IMR-90 (cell line): ENCODE measurements at regions of chr2 and their contacts with region 1.

Region 1: DNA sequence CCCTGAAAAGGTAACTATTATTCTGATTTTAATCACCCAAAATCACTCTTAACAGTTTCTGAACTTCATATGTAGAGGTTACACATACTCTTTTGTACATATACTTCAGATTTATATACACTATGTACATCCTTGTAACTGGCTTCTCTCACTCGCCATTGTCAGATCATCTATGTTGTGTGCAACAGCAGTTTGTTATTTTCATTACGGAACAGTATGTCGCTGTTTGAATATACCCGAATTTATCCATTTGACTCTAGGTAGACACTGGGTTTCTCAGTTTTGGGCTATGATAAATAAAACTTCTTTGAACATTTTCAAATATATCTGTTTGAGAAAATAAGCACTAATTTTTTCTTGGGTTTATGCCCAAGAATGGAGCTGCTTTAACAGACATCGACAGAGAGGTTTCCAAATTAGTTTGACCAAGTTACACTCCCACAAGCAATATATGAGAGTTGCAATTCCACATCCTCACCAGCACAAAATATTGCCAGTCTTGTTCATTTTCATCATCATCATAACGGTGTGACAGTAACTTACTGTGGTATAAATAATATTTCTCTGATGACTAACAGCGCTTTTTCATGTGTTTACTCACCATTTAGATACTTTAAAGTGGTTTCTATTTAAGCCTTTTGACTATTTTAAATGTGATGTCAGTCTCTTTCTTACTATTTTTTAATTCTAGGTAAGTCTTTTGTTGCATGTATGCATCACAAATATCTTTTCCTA is 80.9 kb downstream of the SMC6 start:
- DNase-seq: peak; percentile 79
- ATAC-seq: peak; percentile 84
- H3K4me3 ChIP-seq: no peak overlapping the region
- H3K27ac ChIP-seq: no peak overlapping the region
- H3K4me1 ChIP-seq: no peaks in the 10 kb centered on the region; the same call in none of the 2 replicates
- H3K27me3 ChIP-seq: no peaks in the 10 kb centered on the region
- CTCF ChIP-seq: no peak; the same call in 1 of the 2 replicates
- POLR2A ChIP-seq: no peak
- RAD21 ChIP-seq: no peak

Region 2: GRCh38 chr2:16773080-16773713 is 899.6 kb before region 1 on chr2:
- CTCF ChIA-PET with region 1: interaction called, 11 read pairs
- POLR2A ChIA-PET with region 1: no interaction called
- dilution Hi-C with region 1: no loop called
- in situ Hi-C with region 1: loop called (anchors 25 kb)
- intact Hi-C with region 1: loop called (anchors 1 kb)
- DNase-seq: peak; percentile 42
- ATAC-seq: peak; percentile 87
- H3K4me3 ChIP-seq: no peak overlapping the region
- H3K27ac ChIP-seq: no peak overlapping the region
- H3K4me1 ChIP-seq: no peaks in the 10 kb centered on the region
- H3K27me3 ChIP-seq: peaks cover 1% of the 10 kb centered on the region; the same call in 1 of the 2 replicates
- CTCF ChIP-seq: peak; percentile 56
- POLR2A ChIP-seq: no peak
- RAD21 ChIP-seq: peak; percentile 70

Region 3: GRCh38 chr2:17309741-17310339 is 362.9 kb before region 1 on chr2:
- CTCF ChIA-PET with region 1: interaction called, 3 read pairs
- POLR2A ChIA-PET with region 1: no interaction called
- dilution Hi-C with region 1: no loop called
- in situ Hi-C with region 1: no loop called
- intact Hi-C with region 1: loop called (anchors 1 kb)
- DNase-seq: peak; percentile 49
- ATAC-seq: peak; percentile 77
- H3K4me3 ChIP-seq: no peak overlapping the region
- H3K27ac ChIP-seq: no peak overlapping the region
- H3K4me1 ChIP-seq: no peaks in the 10 kb centered on the region
- H3K27me3 ChIP-seq: no peaks in the 10 kb centered on the region
- CTCF ChIP-seq: peak; percentile 51
- POLR2A ChIP-seq: no peak
- RAD21 ChIP-seq: peak; percentile 49; the same call in 1 of the 2 replicates

Region 4: GRCh38 chr2:17470855-17471641 is 201.7 kb before region 1 on chr2:
- CTCF ChIA-PET with region 1: no interaction called
- POLR2A ChIA-PET with region 1: no interaction called
- dilution Hi-C with region 1: no loop called
- in situ Hi-C with region 1: loop called (anchors 10 kb)
- intact Hi-C with region 1: loop called (anchors 1 kb)
- DNase-seq: peak; percentile 40
- ATAC-seq: peak; percentile 48
- H3K4me3 ChIP-seq: no peak overlapping the region
- H3K27ac ChIP-seq: no peak overlapping the region
- H3K4me1 ChIP-seq: no peaks in the 10 kb centered on the region
- H3K27me3 ChIP-seq: no peaks in the 10 kb centered on the region
- CTCF ChIP-seq: peak; percentile 45
- POLR2A ChIP-seq: no peak
- RAD21 ChIP-seq: peak; percentile 60

Region 5: GRCh38 chr2:17479875-17480274 is 192.9 kb before region 1 on chr2:
- CTCF ChIA-PET with region 1: interaction called, 10 read pairs
- POLR2A ChIA-PET with region 1: no interaction called
- dilution Hi-C with region 1: no loop called
- in situ Hi-C with region 1: loop called (anchors 10 kb)
- intact Hi-C with region 1: no loop called
- DNase-seq: peak; percentile 28
- ATAC-seq: peak; percentile 37; the same call in 1 of the 2 replicates
- H3K4me3 ChIP-seq: no peak overlapping the region
- H3K27ac ChIP-seq: no peak overlapping the region
- H3K4me1 ChIP-seq: no peaks in the 10 kb centered on the region
- H3K27me3 ChIP-seq: no peaks in the 10 kb centered on the region
- CTCF ChIP-seq: no peak
- POLR2A ChIP-seq: no peak
- RAD21 ChIP-seq: no peak

Region 6: GRCh38 chr2:17529771-17530170 is 143.0 kb before region 1 on chr2:
- CTCF ChIA-PET with region 1: no interaction called
- POLR2A ChIA-PET with region 1: no interaction called
- dilution Hi-C with region 1: no loop called
- in situ Hi-C with region 1: no loop called
- intact Hi-C with region 1: no loop called
- DNase-seq: no peak
- ATAC-seq: no peak
- H3K4me3 ChIP-seq: no peak overlapping the region
- H3K27ac ChIP-seq: no peak overlapping the region
- H3K4me1 ChIP-seq: no peaks in the 10 kb centered on the region
- H3K27me3 ChIP-seq: no peaks in the 10 kb centered on the region
- CTCF ChIP-seq: no peak
- POLR2A ChIP-seq: no peak
- RAD21 ChIP-seq: no peak

Region 7: GRCh38 chr2:17646081-17646554 is 26.6 kb before region 1 on chr2:
- CTCF ChIA-PET with region 1: interaction called, 27 read pairs
- POLR2A ChIA-PET with region 1: no interaction called
- dilution Hi-C with region 1: no loop called
- in situ Hi-C with region 1: no loop called
- intact Hi-C with region 1: loop called (anchors 2 kb)
- DNase-seq: peak; percentile 88
- ATAC-seq: peak; percentile 76
- H3K4me3 ChIP-seq: no peak overlapping the region
- H3K27ac ChIP-seq: no peak overlapping the region
- H3K4me1 ChIP-seq: peaks cover 21% of the 10 kb centered on the region
- H3K27me3 ChIP-seq: no peaks in the 10 kb centered on the region
- CTCF ChIP-seq: peak; percentile 91
- POLR2A ChIP-seq: no peak
- RAD21 ChIP-seq: peak; percentile 59